WTC11 (cell line): ENCODE measurements at regions of chr16 and their contacts with region 1.

Region 1: GRCh38 chr16:67672739-67673662 is 6.4 kb downstream of the C16orf86 start:
- DNase-seq: peak; percentile 79
- ATAC-seq: peak; percentile 62
- H3K4me3 Mint-ChIP-seq: no peak overlapping the region
- H3K27ac Mint-ChIP-seq: peak overlapping the region; percentile 30; the same call in 1 of the 2 replicates
- H3K4me1 Mint-ChIP-seq: no peaks in the 10 kb centered on the region; the same call in 1 of the 2 replicates
- H3K27me3 Mint-ChIP-seq: no peaks in the 10 kb centered on the region
- CTCF ChIP-seq: peak; percentile 62

Region 2: GRCh38 chr16:67653128-67653786 is 19.7 kb before region 1 on chr16:
- CTCF ChIA-PET with region 1: interaction called, 16 read pairs
- POLR2A ChIA-PET with region 1: no interaction called
- DNase-seq: no peak
- ATAC-seq: peak; percentile 28
- H3K4me3 Mint-ChIP-seq: peak overlapping the region; percentile 72
- H3K27ac Mint-ChIP-seq: no peak overlapping the region
- H3K4me1 Mint-ChIP-seq: peaks cover 12% of the 10 kb centered on the region
- H3K27me3 Mint-ChIP-seq: peaks cover 69% of the 10 kb centered on the region
- CTCF ChIP-seq: no peak

Region 3: GRCh38 chr16:67719048-67719777 is 46.2 kb after region 1 on chr16 and contains the start of gene GFOD2:
- CTCF ChIA-PET with region 1: interaction called, 14 read pairs
- POLR2A ChIA-PET with region 1: no interaction called
- DNase-seq: peak; percentile 99
- ATAC-seq: peak; percentile 94
- H3K4me3 Mint-ChIP-seq: peak within 1 kb of the TSS; percentile 91
- H3K27ac Mint-ChIP-seq: peak within 1 kb of the TSS; percentile 82
- H3K4me1 Mint-ChIP-seq: peaks cover 21% of the 10 kb centered on the region
- H3K27me3 Mint-ChIP-seq: no peaks in the 10 kb centered on the region
- CTCF ChIP-seq: no peak
- total RNA-seq, gene GFOD2: 19.3 to 29.5 TPM (median 22.8 TPM) in 3 replicates

Region 4: DNA sequence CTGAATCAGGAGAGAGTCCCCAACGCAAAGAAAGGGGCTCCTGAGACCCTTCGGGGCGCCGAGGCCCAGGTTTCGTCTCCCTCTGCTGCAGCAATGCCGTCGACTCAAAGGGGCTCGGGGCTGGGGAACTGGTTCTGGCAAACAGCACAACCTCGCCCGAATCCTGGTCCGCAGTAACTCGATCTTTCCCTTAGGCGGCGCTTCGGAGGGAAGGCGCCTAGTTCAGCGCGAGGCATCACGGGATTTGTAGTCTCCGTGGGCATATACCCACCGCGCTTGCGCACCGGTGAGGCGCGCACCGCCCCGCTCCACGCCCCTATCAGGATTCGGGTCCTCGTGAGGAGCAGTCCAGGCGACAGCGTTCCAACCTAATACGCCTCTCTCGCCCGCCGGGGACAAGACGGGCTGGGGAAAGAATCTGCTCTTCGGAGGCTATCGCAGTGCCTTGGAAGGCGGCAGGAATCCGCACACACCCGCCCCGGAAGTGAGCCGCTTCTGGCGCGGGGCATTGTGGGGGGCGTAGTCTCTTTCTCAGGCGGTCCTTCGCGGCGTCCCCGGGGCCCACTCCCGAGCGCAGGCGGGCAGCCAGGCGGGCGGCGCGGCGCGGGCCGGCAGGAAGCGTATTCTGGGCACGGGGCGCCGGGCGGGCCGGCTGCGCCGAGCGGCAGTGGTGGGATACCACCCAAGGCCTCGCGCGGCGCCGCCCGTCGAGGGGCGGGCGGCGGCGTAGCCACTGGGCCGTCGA is 168.9 kb after region 1 on chr16 and contains the start of gene THAP11:
- CTCF ChIA-PET with region 1: interaction called, 12 read pairs
- POLR2A ChIA-PET with region 1: no interaction called
- DNase-seq: peak; percentile 98
- ATAC-seq: peak; percentile 51
- H3K4me3 Mint-ChIP-seq: peak within 1 kb of the TSS; percentile 94
- H3K27ac Mint-ChIP-seq: peak within 1 kb of the TSS; percentile 97
- H3K4me1 Mint-ChIP-seq: peaks cover 40% of the 10 kb centered on the region
- H3K27me3 Mint-ChIP-seq: no peaks in the 10 kb centered on the region
- CTCF ChIP-seq: peak; percentile 69
- total RNA-seq, gene THAP11: 46.5 to 49.0 TPM (median 47.4 TPM) in 3 replicates

Region 5: GRCh38 chr16:67942200-67942509 is 269.2 kb after region 1 on chr16:
- CTCF ChIA-PET with region 1: interaction called, 11 read pairs
- POLR2A ChIA-PET with region 1: no interaction called
- DNase-seq: peak; percentile 78
- ATAC-seq: peak; percentile 83
- H3K4me3 Mint-ChIP-seq: no peak overlapping the region
- H3K27ac Mint-ChIP-seq: no peak overlapping the region
- H3K4me1 Mint-ChIP-seq: peaks cover 7% of the 10 kb centered on the region
- H3K27me3 Mint-ChIP-seq: no peaks in the 10 kb centered on the region
- CTCF ChIP-seq: peak; percentile 63